CD4-positive, alpha-beta T cell (primary cell): ENCODE measurements at regions of chr1 and their contacts with region 1.

Region 1: GRCh38 chr1:243325305-243325890 is 69.6 kb downstream of the SDCCAG8 start:
- DNase-seq: peak in 4 of 14 experiments; percentile 43 to 72 (median 62)
- ATAC-seq: peak; percentile 55
- H3K4me3 ChIP-seq: no peak overlapping the region
- H3K4me3 Mint-ChIP-seq: no peak overlapping the region
- H3K27ac ChIP-seq: no peak overlapping the region
- H3K27ac Mint-ChIP-seq: no peak overlapping the region
- H3K4me1 ChIP-seq: no peaks in the 10 kb centered on the region
- H3K4me1 Mint-ChIP-seq: no peaks in the 10 kb centered on the region
- H3K27me3 ChIP-seq: no peaks in the 10 kb centered on the region
- H3K27me3 Mint-ChIP-seq: no peaks in the 10 kb centered on the region
- CTCF ChIP-seq: peak; percentile 88

Region 2: GRCh38 chr1:241605146-241605805 is 1720.1 kb before region 1 on chr1:
- CTCF ChIA-PET with region 1: no interaction called
- POLR2A ChIA-PET with region 1: no interaction called
- intact Hi-C with region 1: loop called (anchors 5 kb)
- DNase-seq: peak in 2 of 14 experiments; percentile 6 to 23
- ATAC-seq: no peak
- H3K4me3 ChIP-seq: no peak overlapping the region
- H3K4me3 Mint-ChIP-seq: no peak overlapping the region
- H3K27ac ChIP-seq: no peak overlapping the region
- H3K27ac Mint-ChIP-seq: no peak overlapping the region
- H3K4me1 ChIP-seq: no peaks in the 10 kb centered on the region
- H3K4me1 Mint-ChIP-seq: no peaks in the 10 kb centered on the region
- H3K27me3 ChIP-seq: no peaks in the 10 kb centered on the region
- H3K27me3 Mint-ChIP-seq: no peaks in the 10 kb centered on the region
- CTCF ChIP-seq: no peak

Region 3: GRCh38 chr1:241895013-241895412 is 1430.4 kb before region 1 on chr1:
- CTCF ChIA-PET with region 1: no interaction called
- POLR2A ChIA-PET with region 1: no interaction called
- intact Hi-C with region 1: loop called (anchors 1 to 10 kb)
- DNase-seq: no peak
- ATAC-seq: no peak
- H3K4me3 ChIP-seq: no peak overlapping the region
- H3K4me3 Mint-ChIP-seq: no peak overlapping the region
- H3K27ac ChIP-seq: no peak overlapping the region
- H3K27ac Mint-ChIP-seq: no peak overlapping the region
- H3K4me1 ChIP-seq: no peaks in the 10 kb centered on the region
- H3K4me1 Mint-ChIP-seq: no peaks in the 10 kb centered on the region
- H3K27me3 ChIP-seq: no peaks in the 10 kb centered on the region
- H3K27me3 Mint-ChIP-seq: no peaks in the 10 kb centered on the region
- CTCF ChIP-seq: no peak

Region 4: DNA sequence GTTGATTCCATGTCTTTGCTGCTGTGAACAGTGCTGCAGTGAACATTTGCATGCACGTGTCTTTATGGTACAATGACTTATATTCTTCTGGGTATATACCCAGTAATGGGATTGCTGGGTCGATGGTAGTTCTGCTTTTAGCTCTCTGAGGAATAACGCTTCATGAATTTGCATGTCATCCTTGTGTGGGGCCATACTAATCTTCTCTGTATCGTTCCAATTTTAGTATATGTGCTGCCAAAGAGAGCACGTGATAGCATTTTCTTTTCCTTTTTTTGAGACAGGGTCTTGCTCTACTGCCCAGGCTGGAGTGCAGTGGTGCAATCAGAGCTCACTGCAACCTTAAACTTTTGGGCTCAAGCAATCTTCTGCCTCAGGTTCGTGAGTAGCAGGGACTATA is 1301.6 kb before region 1 on chr1:
- CTCF ChIA-PET with region 1: no interaction called
- POLR2A ChIA-PET with region 1: no interaction called
- intact Hi-C with region 1: loop called (anchors 5 to 10 kb)
- DNase-seq: no peak
- ATAC-seq: no peak
- H3K4me3 ChIP-seq: no peak overlapping the region
- H3K4me3 Mint-ChIP-seq: no peak overlapping the region
- H3K27ac ChIP-seq: no peak overlapping the region
- H3K27ac Mint-ChIP-seq: no peak overlapping the region
- H3K4me1 ChIP-seq: no peaks in the 10 kb centered on the region
- H3K4me1 Mint-ChIP-seq: no peaks in the 10 kb centered on the region
- H3K27me3 ChIP-seq: no peaks in the 10 kb centered on the region
- H3K27me3 Mint-ChIP-seq: peaks cover 1% of the 10 kb centered on the region
- CTCF ChIP-seq: no peak

Region 5: DNA sequence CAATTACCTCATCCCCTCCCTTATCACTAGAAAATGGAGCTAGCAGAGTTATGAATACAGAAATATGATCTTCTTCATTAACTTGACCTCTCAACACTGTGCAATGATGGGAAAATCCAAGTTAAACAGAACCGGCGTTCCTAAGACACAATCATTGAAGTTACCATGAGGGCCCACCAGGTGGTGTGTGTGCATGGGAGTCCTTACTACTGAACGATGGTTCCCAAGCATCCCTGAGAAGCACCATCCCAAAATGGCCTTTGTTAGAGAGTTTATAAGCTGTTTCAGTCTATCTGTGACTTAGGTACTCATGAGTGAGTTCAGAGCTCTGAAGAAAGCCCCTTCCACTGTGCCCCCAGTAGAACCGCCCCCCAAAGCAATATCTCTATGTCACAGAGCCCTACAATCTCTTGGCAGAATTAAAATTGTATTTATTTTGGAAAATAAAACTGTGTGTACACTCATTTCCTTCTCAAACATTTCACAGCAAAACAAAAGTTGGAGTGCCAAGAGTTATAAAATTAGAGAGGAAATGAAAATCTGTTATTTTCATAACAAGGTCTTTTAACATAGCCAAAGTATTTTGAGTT is 857.7 kb before region 1 on chr1:
- CTCF ChIA-PET with region 1: no interaction called
- POLR2A ChIA-PET with region 1: no interaction called
- intact Hi-C with region 1: loop called in 1 of 2 experiments (anchors 2 kb)
- DNase-seq: peak in 3 of 14 experiments; percentile 18 to 27 (median 26)
- ATAC-seq: no peak
- H3K4me3 ChIP-seq: no peak overlapping the region
- H3K4me3 Mint-ChIP-seq: no peak overlapping the region
- H3K27ac ChIP-seq: no peak overlapping the region
- H3K27ac Mint-ChIP-seq: no peak overlapping the region
- H3K4me1 ChIP-seq: no peaks in the 10 kb centered on the region
- H3K4me1 Mint-ChIP-seq: no peaks in the 10 kb centered on the region
- H3K27me3 ChIP-seq: no peaks in the 10 kb centered on the region
- H3K27me3 Mint-ChIP-seq: peaks cover 17% of the 10 kb centered on the region
- CTCF ChIP-seq: peak; percentile 27

Region 6: DNA sequence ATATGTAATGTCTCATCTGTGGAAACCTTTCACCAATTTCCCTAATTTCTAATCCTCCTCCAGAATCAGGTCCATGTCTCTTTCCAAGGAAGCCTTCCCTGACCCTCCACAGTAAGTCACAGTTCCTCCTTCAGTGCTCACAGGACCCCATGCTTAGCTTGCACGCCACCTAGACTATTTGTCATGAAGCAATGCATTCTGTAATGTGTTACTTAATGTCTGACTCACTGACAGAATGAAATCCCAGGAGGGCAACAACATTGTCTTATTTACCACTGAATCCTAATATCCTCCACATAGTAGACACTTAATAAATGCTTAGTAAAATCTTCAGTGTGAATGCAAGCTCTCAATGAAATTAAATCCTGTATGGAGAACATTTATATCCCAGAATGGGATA is 555.0 kb before region 1 on chr1:
- CTCF ChIA-PET with region 1: no interaction called
- POLR2A ChIA-PET with region 1: no interaction called
- intact Hi-C with region 1: no loop called
- DNase-seq: no peak
- ATAC-seq: no peak
- H3K4me3 ChIP-seq: no peak overlapping the region
- H3K4me3 Mint-ChIP-seq: no peak overlapping the region
- H3K27ac ChIP-seq: no peak overlapping the region
- H3K27ac Mint-ChIP-seq: no peak overlapping the region
- H3K4me1 ChIP-seq: no peaks in the 10 kb centered on the region
- H3K4me1 Mint-ChIP-seq: no peaks in the 10 kb centered on the region
- H3K27me3 ChIP-seq: no peaks in the 10 kb centered on the region
- H3K27me3 Mint-ChIP-seq: no peaks in the 10 kb centered on the region
- CTCF ChIP-seq: no peak

Region 7: DNA sequence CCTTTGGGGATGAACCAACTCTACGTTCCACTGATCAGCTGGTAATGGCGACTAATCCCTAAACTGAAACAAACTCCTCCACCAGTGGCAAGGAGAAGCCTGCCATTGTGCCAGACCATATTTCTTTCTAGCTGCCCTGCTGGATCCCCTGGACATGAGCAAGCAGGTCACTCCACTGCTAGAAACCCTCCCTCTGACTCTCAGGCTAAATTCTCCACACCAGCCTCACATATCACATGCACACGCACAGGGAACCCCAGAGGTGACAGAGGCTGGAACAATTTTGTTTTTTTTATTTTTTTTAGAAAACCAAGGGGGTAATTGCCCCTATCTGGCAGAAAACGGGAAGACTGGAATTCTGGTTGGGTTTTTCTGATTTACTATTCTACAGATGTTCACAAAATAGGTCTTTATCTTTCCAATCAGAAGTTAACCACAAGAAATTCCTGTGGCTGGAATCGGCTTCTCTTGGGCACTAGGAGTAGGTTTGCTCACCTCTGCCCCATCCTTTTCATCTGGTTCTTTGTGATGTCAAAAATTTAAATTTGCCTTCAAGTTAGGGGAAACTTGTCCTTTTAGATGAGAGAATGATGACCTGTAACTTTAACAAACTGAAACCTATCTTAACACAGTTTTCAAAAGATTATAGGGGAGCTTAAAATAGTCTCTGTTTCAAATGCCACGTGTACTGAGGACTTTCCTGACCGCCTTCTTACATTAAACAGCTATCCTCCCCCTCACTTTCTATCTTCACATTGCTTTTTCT is 188.5 kb after region 1 on chr1:
- CTCF ChIA-PET with region 1: no interaction called
- POLR2A ChIA-PET with region 1: no interaction called
- intact Hi-C with region 1: no loop called
- DNase-seq: no peak
- ATAC-seq: no peak
- H3K4me3 ChIP-seq: no peak overlapping the region
- H3K4me3 Mint-ChIP-seq: no peak overlapping the region
- H3K27ac ChIP-seq: no peak overlapping the region
- H3K27ac Mint-ChIP-seq: peak overlapping the region; percentile 1
- H3K4me1 ChIP-seq: peaks cover 7% of the 10 kb centered on the region
- H3K4me1 Mint-ChIP-seq: peaks cover 24% of the 10 kb centered on the region
- H3K27me3 ChIP-seq: no peaks in the 10 kb centered on the region
- H3K27me3 Mint-ChIP-seq: no peaks in the 10 kb centered on the region
- CTCF ChIP-seq: no peak